B cell (primary cell): ENCODE measurements at regions of chr3 and their contacts with region 1.

Region 1: DNA sequence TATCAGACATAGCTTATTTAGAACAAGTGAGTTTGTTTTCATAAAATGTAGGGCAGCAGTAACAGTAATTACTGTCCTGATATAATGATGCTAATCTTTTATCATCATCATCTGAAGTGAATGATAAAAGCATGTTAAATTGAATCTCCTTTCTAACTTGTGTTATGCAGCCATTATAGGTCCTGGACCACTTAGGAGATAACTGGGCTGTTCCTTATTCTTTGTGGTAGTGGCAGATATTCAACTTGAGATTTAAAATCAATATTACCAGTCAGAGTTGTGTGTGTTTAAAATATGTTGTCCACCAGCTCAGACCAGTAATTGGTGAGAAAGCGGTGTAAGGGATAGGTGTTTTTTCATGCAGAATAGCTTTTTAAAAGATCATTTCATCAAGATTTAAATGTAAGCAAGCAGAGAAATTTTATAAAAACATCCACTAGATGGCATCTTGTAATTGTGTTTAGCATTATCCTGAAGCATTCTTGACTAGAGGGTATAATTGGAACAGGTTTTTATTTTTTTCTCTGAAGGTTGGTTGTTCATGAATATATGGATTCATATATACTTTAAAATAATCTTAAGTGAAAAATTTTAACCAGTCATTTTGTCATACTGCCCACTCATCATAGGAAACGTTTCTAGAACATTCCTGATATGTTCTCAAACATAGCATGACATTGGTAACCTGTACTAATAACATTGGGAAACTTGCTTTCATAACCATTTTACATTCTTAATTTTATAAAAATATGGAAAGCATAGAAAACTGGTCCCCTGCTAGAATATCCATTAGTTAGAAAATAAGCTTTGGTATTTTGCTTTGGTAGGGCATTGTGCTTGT is 153.9 kb downstream of the BBX start:
- DNase-seq: peak; percentile 38
- ATAC-seq: no peak
- H3K4me3 ChIP-seq: no peak overlapping the region
- H3K4me3 Mint-ChIP-seq: peak overlapping the region; percentile 20
- H3K27ac ChIP-seq: peak overlapping the region; percentile 18 to 77
- H3K27ac Mint-ChIP-seq: peak overlapping the region; percentile 56
- H3K4me1 ChIP-seq: peaks cover 23 to 30% of the 10 kb centered on the region in 2 donors
- H3K4me1 Mint-ChIP-seq: peaks cover 54% of the 10 kb centered on the region
- H3K27me3 ChIP-seq: no peaks in the 10 kb centered on the region
- H3K27me3 Mint-ChIP-seq: no peaks in the 10 kb centered on the region
- CTCF ChIP-seq: peak; percentile 76

Region 2: GRCh38 chr3:107574650-107575049 is 102.0 kb before region 1 on chr3:
- CTCF ChIA-PET with region 1: interaction called, 10 read pairs
- POLR2A ChIA-PET with region 1: no interaction called
- intact Hi-C with region 1: no loop called
- DNase-seq: peak; percentile 17
- ATAC-seq: no peak
- H3K4me3 ChIP-seq: no peak overlapping the region
- H3K4me3 Mint-ChIP-seq: no peak overlapping the region
- H3K27ac ChIP-seq: no peak overlapping the region
- H3K27ac Mint-ChIP-seq: no peak overlapping the region
- H3K4me1 ChIP-seq: no peaks in the 10 kb centered on the region
- H3K4me1 Mint-ChIP-seq: peaks cover 24% of the 10 kb centered on the region
- H3K27me3 ChIP-seq: no peaks in the 10 kb centered on the region
- H3K27me3 Mint-ChIP-seq: no peaks in the 10 kb centered on the region
- CTCF ChIP-seq: peak; percentile 63

Region 3: DNA sequence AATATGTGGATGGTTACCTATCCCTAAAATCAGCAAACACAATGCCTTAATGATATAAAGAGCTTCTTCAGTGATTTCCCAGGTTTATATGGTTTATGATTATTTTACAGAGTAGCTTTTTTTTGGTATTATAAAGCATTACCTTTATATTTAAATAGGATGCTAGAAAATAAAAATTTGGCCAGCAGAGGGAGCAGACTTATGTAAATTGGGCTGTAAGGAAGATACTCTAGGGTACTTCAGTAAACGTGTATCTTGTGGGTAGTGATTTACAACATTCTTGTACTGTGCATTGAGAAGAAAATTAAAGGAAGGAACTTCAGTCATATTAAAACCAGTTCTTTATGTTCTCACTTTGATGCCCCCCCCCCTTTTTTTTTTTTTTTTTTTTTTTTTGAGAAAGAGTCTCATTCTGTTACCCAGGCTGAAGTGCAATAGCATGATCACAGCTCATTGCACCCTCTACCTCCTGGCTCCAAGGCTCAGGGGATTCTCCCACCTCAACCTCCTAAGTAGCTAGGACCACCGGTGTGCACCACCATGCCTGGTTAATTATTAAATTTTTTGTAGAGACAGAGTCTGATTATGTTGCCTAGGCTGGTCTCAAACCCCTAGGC is 13.9 kb after region 1 on chr3:
- CTCF ChIA-PET with region 1: interaction called, 89 read pairs
- POLR2A ChIA-PET with region 1: interaction called, 9 read pairs
- intact Hi-C with region 1: no loop called
- DNase-seq: peak; percentile 66
- ATAC-seq: peak; percentile 64
- H3K4me3 ChIP-seq: no peak overlapping the region
- H3K4me3 Mint-ChIP-seq: no peak overlapping the region
- H3K27ac ChIP-seq: no peak overlapping the region
- H3K27ac Mint-ChIP-seq: no peak overlapping the region
- H3K4me1 ChIP-seq: peaks cover 0 to 2% of the 10 kb centered on the region in 2 donors
- H3K4me1 Mint-ChIP-seq: peaks cover 6% of the 10 kb centered on the region
- H3K27me3 ChIP-seq: no peaks in the 10 kb centered on the region
- H3K27me3 Mint-ChIP-seq: no peaks in the 10 kb centered on the region
- CTCF ChIP-seq: peak; percentile 70

Region 4: GRCh38 chr3:107927361-107928083 is 250.8 kb after region 1 on chr3:
- CTCF ChIA-PET with region 1: interaction called, 28 read pairs
- POLR2A ChIA-PET with region 1: no interaction called
- intact Hi-C with region 1: loop called (anchors 5 kb)
- DNase-seq: peak; percentile 77
- ATAC-seq: peak; percentile 93
- H3K4me3 ChIP-seq: peak overlapping the region; percentile 48 to 67 (median 58)
- H3K4me3 Mint-ChIP-seq: peak overlapping the region; percentile 93
- H3K27ac ChIP-seq: no peak overlapping the region
- H3K27ac Mint-ChIP-seq: peak overlapping the region; percentile 54
- H3K4me1 ChIP-seq: peaks cover 12 to 18% of the 10 kb centered on the region in 2 donors
- H3K4me1 Mint-ChIP-seq: peaks cover 15% of the 10 kb centered on the region
- H3K27me3 ChIP-seq: peaks cover 0 to 30% (median 8%) of the 10 kb centered on the region in 4 experiments
- H3K27me3 Mint-ChIP-seq: peaks cover 9% of the 10 kb centered on the region
- CTCF ChIP-seq: peak; percentile 86

Region 5: DNA sequence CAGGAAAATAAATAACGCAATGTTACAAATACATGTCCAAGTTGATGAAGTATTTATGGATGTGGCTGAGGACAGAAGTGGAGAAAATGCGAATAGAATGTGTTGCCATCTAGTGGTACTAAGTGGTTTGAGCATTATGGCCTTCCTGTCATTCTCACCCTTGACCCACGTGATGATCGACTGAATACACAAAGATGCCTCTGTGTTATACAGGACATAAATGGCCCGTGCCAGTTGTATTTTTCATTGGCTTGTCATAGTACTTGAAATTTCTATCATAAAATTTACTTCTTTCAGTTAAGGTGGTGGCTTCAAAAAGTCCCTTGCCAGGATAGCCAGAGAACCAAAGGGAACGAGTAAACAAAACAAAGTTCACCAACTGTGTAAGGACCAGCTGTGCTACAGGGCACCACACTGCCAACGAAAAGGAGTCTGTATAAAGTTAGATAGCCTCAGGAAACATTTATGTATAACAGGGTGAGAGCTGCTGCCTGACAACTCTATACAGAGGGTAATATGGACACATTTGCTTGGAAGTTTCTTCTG is 730.0 kb after region 1 on chr3:
- CTCF ChIA-PET with region 1: interaction called, 3 read pairs
- POLR2A ChIA-PET with region 1: no interaction called
- intact Hi-C with region 1: loop called (anchors 10 kb)
- DNase-seq: peak; percentile 78
- ATAC-seq: peak; percentile 75
- H3K4me3 ChIP-seq: peak overlapping the region in 1 of 5 experiments; percentile 3
- H3K4me3 Mint-ChIP-seq: peak overlapping the region; percentile 54
- H3K27ac ChIP-seq: peak overlapping the region; percentile 16 to 49
- H3K27ac Mint-ChIP-seq: peak overlapping the region; percentile 82
- H3K4me1 ChIP-seq: peaks cover 26 to 27% of the 10 kb centered on the region in 2 donors
- H3K4me1 Mint-ChIP-seq: peaks cover 31% of the 10 kb centered on the region
- H3K27me3 ChIP-seq: no peaks in the 10 kb centered on the region
- H3K27me3 Mint-ChIP-seq: no peaks in the 10 kb centered on the region
- CTCF ChIP-seq: peak; percentile 79